ENCODE measurements at regions of chr11 and their contacts with region 1.

Region 1: DNA sequence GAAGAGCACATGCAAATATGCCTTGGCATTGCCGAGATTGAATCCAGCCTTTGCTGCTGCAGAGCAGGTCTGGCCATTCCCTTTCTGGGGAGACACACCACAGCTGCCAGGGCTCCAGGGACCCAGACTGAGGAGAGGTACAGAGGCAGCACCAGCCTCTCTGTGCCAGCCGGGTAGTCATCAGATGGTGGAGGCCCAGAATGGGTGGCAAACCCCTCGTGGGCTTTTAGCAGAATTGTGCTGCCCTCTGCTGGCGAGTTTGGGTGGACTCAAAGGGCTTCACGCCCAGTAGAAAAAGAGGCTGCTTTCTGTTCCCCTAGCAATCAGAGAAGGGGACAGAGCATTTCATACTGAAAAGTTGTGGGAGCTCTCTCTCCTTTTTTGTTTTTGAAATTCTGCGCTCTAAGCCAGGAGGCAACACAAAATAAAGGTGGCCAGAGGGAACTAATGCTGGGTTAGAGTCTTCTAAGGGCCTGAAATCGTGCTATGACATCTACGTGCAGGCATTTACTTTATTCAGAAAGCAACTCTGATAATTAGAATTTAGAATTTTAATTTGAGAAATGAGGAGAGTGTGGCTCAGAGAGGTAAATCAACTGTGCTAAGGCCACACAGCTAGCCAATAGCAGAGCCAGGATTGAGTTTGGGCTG is 158.8 kb upstream of the NAV2 start:
- DNase-seq: peak; percentile 53
- ATAC-seq: peak; percentile 66
- H3K4me3 Mint-ChIP-seq: no peak overlapping the region
- H3K27ac Mint-ChIP-seq: no peak overlapping the region
- H3K4me1 Mint-ChIP-seq: no peaks in the 10 kb centered on the region
- H3K27me3 Mint-ChIP-seq: peaks cover 6% of the 10 kb centered on the region
- CTCF ChIP-seq: no peak

Region 2: GRCh38 chr11:18115360-18116127 is 1438.3 kb before region 1 on chr11:
- CTCF ChIA-PET with region 1: no interaction called
- POLR2A ChIA-PET with region 1: no interaction called
- intact Hi-C with region 1: loop called (anchors 5 kb)
- DNase-seq: peak; percentile 36
- ATAC-seq: peak; percentile 93
- H3K4me3 Mint-ChIP-seq: no peak overlapping the region
- H3K27ac Mint-ChIP-seq: no peak overlapping the region
- H3K4me1 Mint-ChIP-seq: peaks cover 4% of the 10 kb centered on the region
- H3K27me3 Mint-ChIP-seq: peaks cover 14% of the 10 kb centered on the region
- CTCF ChIP-seq: peak; percentile 64

Region 3: DNA sequence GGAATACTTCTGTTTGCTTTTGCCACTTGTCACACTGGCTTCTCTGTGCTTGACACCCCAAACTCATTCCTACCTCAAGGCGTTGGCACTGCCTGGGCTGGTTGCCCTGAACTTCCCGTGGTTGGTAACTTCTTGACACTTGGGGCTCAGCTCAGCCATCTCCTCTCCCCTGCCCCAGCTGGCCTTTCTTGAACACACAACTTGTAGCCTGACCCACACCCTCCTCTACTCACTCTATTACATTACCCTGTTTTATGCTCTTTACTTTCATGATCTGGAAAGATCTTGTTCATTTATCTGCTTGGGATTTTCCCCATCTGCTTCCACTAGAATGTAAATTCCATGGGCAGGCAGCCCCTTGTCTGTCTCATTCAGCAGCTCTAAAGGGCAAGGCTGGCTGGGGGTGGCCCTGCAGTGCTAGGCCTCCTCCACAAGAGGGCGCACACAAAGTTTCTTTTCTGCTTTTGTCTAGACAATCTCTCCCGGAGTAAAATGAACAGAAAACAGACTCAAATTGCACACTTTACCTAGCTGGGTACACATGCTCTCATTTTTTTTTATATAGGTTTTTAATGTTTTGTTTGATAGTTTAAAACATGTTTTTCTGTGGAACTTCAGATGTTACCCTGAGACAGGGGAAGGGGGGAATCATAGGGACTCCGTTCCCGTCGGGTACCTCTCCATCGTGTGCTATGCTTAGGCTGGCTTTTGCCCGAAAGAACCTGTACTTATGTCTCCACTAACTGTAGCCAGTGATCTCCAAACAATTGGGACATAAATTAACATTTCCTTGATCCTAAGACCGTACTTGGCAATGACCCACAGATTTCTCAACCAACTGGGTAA is 476.8 kb before region 1 on chr11:
- CTCF ChIA-PET with region 1: interaction called, 10 read pairs
- POLR2A ChIA-PET with region 1: no interaction called
- intact Hi-C with region 1: no loop called
- DNase-seq: peak; percentile 31
- ATAC-seq: peak; percentile 81
- H3K4me3 Mint-ChIP-seq: no peak overlapping the region
- H3K27ac Mint-ChIP-seq: no peak overlapping the region
- H3K4me1 Mint-ChIP-seq: no peaks in the 10 kb centered on the region
- H3K27me3 Mint-ChIP-seq: peaks cover 11% of the 10 kb centered on the region
- CTCF ChIP-seq: peak; percentile 98

Region 4: DNA sequence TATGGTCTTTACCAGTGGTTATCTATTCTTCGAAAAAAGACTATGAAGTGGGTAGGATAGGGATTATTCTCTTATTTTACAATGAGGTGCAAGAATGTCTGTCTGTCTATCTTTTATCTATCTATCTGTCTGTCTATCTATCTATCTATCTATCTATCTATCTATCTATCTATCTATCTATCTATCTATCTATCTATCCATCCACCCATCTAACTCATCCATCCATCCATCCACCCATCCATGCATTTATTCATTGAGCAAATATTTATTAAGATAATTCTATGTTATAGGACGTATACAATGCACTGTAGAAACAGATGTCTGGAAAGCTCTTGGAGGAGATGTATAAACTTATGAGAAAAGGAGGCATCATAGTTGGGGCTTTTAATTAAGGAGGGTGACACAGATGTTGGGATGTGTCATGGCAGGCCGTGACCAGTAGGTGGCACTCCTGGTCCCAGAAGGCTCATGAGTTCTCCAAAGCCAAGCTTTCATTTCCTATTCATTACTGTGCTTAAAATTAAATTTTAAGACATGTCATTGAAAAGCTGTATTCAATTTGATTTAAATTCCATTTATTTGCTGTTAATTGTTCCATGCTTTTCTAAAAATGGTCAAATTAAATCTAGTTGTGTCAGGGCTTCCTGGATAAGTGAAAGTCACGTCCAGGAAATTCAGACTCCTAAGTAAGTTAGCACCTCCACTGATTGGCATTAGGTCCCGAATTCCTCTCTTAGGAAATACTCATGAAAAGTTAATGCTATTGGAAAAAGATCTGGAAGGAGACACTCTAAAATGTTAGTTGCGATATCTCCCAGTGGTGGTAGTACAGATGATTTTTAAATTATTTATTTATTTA is 294.1 kb before region 1 on chr11:
- CTCF ChIA-PET with region 1: interaction called, 29 read pairs
- POLR2A ChIA-PET with region 1: no interaction called
- intact Hi-C with region 1: loop called (anchors 1 kb)
- DNase-seq: peak; percentile 45
- ATAC-seq: peak; percentile 87
- H3K4me3 Mint-ChIP-seq: no peak overlapping the region
- H3K27ac Mint-ChIP-seq: no peak overlapping the region
- H3K4me1 Mint-ChIP-seq: peaks cover 4% of the 10 kb centered on the region
- H3K27me3 Mint-ChIP-seq: no peaks in the 10 kb centered on the region
- CTCF ChIP-seq: peak; percentile 79

Region 5: GRCh38 chr11:19326499-19326898 is 227.3 kb before region 1 on chr11:
- CTCF ChIA-PET with region 1: interaction called, 3 read pairs
- POLR2A ChIA-PET with region 1: no interaction called
- intact Hi-C with region 1: loop called (anchors 1 kb)
- DNase-seq: no peak
- ATAC-seq: no peak
- H3K4me3 Mint-ChIP-seq: no peak overlapping the region
- H3K27ac Mint-ChIP-seq: no peak overlapping the region
- H3K4me1 Mint-ChIP-seq: no peaks in the 10 kb centered on the region
- H3K27me3 Mint-ChIP-seq: peaks cover 8% of the 10 kb centered on the region
- CTCF ChIP-seq: no peak

Region 6: GRCh38 chr11:19625438-19625837 is 71.6 kb after region 1 on chr11:
- CTCF ChIA-PET with region 1: no interaction called
- POLR2A ChIA-PET with region 1: no interaction called
- intact Hi-C with region 1: no loop called
- DNase-seq: no peak
- ATAC-seq: no peak
- H3K4me3 Mint-ChIP-seq: no peak overlapping the region
- H3K27ac Mint-ChIP-seq: no peak overlapping the region
- H3K4me1 Mint-ChIP-seq: no peaks in the 10 kb centered on the region
- H3K27me3 Mint-ChIP-seq: peaks cover 5% of the 10 kb centered on the region
- CTCF ChIP-seq: no peak

Region 7: DNA sequence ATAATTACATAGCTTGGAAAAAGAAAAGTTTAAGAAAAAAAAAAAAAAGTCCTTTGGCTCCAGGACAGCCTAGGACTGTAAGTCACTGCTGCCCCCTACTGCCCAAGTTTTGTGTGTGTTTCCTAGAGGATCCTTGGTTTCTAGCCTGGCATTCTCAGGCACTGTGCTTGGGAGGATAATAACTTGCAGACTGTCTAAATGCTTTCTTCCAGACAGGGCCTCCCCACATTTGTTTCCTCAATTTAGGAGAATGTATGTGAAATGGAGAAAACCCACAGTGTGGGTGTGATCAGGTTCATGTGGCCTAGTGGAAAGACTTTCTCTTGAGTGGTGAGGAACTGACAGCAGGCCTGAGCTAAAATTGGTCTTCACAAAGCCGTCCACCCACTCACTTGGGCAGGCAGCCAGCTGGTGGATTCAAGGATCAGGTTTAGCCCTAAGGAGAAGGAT is 349.8 kb after region 1 on chr11:
- CTCF ChIA-PET with region 1: interaction called, 5 read pairs
- POLR2A ChIA-PET with region 1: no interaction called
- intact Hi-C with region 1: loop called (anchors 1 kb)
- DNase-seq: no peak
- ATAC-seq: no peak
- H3K4me3 Mint-ChIP-seq: no peak overlapping the region
- H3K27ac Mint-ChIP-seq: no peak overlapping the region
- H3K4me1 Mint-ChIP-seq: no peaks in the 10 kb centered on the region
- H3K27me3 Mint-ChIP-seq: peaks cover 2% of the 10 kb centered on the region
- CTCF ChIP-seq: no peak

Measured in activated B cell treated with CpG ODN at 0.5 μM for 24 hours (primary cell).